GM12878 (cell line): ENCODE measurements at regions of chr13 and their contacts with region 1.

Region 1: DNA sequence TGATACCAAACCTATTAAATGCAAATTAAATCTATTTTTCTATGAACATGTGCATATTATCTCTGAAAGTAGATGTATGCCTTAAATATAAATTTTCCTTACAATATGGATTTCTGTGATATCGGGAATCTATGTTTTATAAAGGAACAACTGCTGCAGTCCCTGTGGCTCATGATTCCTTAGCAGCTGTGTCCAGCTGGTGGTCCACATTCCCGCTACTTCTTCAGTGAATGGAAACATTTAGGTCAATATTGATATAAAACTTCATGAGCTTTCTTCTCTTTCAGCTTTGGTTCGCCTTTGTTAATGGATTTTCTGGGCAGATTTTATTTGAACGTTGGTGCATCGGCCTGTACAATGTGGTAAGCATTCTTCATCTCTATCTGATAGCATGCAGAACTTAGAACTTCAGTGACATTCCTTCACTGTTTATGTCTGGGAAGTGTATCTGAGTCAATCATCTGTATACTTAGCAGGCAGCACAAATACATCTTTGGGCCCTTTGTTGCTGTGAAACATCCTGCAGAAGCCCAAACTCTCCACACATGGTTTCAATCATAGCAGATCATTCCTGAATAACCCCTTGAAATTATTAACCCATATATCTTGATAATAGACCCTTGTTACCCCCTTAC is 223.9 kb downstream of the SHISA2 start:
- DNase-seq: no peak
- ATAC-seq: no peak
- H3K4me3 ChIP-seq: no peak overlapping the region
- H3K27ac ChIP-seq: no peak overlapping the region
- H3K4me1 ChIP-seq: no peaks in the 10 kb centered on the region
- H3K27me3 ChIP-seq: no peaks in the 10 kb centered on the region
- CTCF ChIP-seq: no peak
- EP300 ChIP-seq: no peak
- POLR2A ChIP-seq: no peak
- RAD21 ChIP-seq: no peak

Region 2: GRCh38 chr13:26062844-26063444 is 235.0 kb after region 1 on chr13:
- CTCF ChIA-PET with region 1: no interaction called
- POLR2A ChIA-PET with region 1: no interaction called
- RAD21 ChIA-PET with region 1: no interaction called
- SMC1A ChIA-PET with region 1: interaction called, 3 read pairs
- in situ Hi-C with region 1: loop called (anchors 5 kb)
- intact Hi-C with region 1: loop called (anchors 2 kb)
- DNase-seq: no peak
- ATAC-seq: peak; percentile 64
- H3K4me3 ChIP-seq: no peak overlapping the region
- H3K27ac ChIP-seq: no peak overlapping the region
- H3K4me1 ChIP-seq: no peaks in the 10 kb centered on the region
- H3K27me3 ChIP-seq: peaks cover 0 to 4% of the 10 kb centered on the region in 2 experiments; a peak in 1 of 4 replicates
- CTCF ChIP-seq: peak; percentile 42 to 59 (median 51); a peak in 5 of 6 replicates
- EP300 ChIP-seq: no peak
- POLR2A ChIP-seq: no peak
- RAD21 ChIP-seq: peak; percentile 70

Region 3: GRCh38 chr13:26457212-26457611 is 629.3 kb after region 1 on chr13:
- CTCF ChIA-PET with region 1: no interaction called
- POLR2A ChIA-PET with region 1: no interaction called
- RAD21 ChIA-PET with region 1: no interaction called
- SMC1A ChIA-PET with region 1: no interaction called
- in situ Hi-C with region 1: no loop called
- intact Hi-C with region 1: no loop called
- DNase-seq: no peak
- ATAC-seq: no peak
- H3K4me3 ChIP-seq: no peak overlapping the region
- H3K27ac ChIP-seq: no peak overlapping the region
- H3K4me1 ChIP-seq: no peaks in the 10 kb centered on the region
- H3K27me3 ChIP-seq: no peaks in the 10 kb centered on the region
- CTCF ChIP-seq: no peak
- EP300 ChIP-seq: no peak
- POLR2A ChIP-seq: no peak
- RAD21 ChIP-seq: no peak